Colonic mucosa (tissue), 4 donors: ENCODE measurements at regions of chr1 and their contacts with region 1.

Region 1: GRCh38 chr1:174262349-174263241 is 103.3 kb downstream of the RABGAP1L start:
- DNase-seq: no peak
- H3K4me3 ChIP-seq: no peak overlapping the region
- H3K27ac ChIP-seq: no peak overlapping the region
- H3K4me1 ChIP-seq: no peaks in the 10 kb centered on the region
- H3K27me3 ChIP-seq: no peaks in the 10 kb centered on the region
- CTCF ChIP-seq: peak; percentile 75

Region 2: DNA sequence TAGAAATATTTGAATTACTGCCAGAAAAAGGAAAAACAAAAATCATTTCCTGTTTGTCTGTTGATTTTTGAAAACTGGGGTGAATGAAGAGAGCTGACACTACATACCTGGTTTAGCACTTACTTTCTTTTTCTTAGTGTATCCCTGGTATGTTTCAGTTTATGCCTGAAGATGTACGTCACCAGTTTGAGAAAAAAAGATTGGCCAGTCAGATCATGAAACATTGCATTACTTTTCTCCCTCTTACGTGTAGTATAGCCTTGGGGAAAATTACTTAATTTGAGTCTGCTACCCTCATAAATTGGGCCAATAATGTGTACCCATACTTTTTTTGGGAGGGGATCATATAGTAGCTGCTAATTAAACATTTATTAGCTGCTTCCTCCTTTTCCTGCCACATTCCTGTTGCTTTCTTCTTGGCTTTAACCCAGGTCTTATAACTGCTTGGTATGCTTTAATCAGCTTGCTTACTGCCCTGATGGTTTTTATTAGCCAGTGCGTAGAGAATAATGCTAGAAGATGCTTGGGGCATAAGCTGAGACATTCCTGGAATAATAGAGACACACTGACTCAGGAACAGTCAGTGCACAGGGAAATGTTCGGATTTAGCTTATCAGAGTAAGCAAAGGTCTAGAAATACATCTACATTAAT is 71.2 kb before region 1 on chr1:
- intact Hi-C with region 1: no loop called
- DNase-seq: no peak
- H3K4me3 ChIP-seq: no peak overlapping the region
- H3K27ac ChIP-seq: no peak overlapping the region
- H3K4me1 ChIP-seq: no peaks in the 10 kb centered on the region
- H3K27me3 ChIP-seq: no peaks in the 10 kb centered on the region
- CTCF ChIP-seq: no peak

Region 3: GRCh38 chr1:174358786-174359453 is 96.3 kb after region 1 on chr1:
- intact Hi-C with region 1: no loop called
- DNase-seq: peak; percentile 78
- H3K4me3 ChIP-seq: no peak overlapping the region
- H3K27ac ChIP-seq: peak overlapping the region; percentile 49
- H3K4me1 ChIP-seq: peaks cover 4% of the 10 kb centered on the region
- H3K27me3 ChIP-seq: no peaks in the 10 kb centered on the region
- CTCF ChIP-seq: no peak

Region 4: DNA sequence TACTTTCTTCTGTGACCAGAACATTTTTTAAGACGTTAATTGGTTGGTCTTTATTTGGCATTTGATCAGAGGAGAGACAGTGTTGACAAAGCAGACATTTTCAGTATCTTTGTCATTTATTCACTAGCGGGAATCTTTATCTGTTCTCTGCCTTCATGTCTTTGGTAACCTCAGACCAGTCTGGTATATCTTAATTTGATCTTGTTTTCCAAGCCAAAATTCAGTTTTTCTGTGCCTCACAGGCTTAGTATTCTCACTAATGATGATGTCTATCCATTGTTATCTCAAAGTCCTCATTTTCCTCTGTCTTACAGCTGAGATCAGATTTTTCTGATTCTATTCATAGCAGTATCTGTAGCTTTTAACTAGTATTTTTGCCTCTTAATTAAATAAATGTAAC is 343.9 kb after region 1 on chr1:
- intact Hi-C with region 1: no loop called
- DNase-seq: no peak
- H3K4me3 ChIP-seq: no peak overlapping the region
- H3K27ac ChIP-seq: no peak overlapping the region
- H3K4me1 ChIP-seq: no peaks in the 10 kb centered on the region
- H3K27me3 ChIP-seq: no peaks in the 10 kb centered on the region
- CTCF ChIP-seq: no peak

Region 5: GRCh38 chr1:174743654-174744561 is 481.3 kb after region 1 on chr1:
- intact Hi-C with region 1: loop called (anchors 5 kb)
- DNase-seq: no peak
- H3K4me3 ChIP-seq: no peak overlapping the region
- H3K27ac ChIP-seq: no peak overlapping the region
- H3K4me1 ChIP-seq: no peaks in the 10 kb centered on the region
- H3K27me3 ChIP-seq: no peaks in the 10 kb centered on the region
- CTCF ChIP-seq: peak; percentile 59